K562 (cell line): ENCODE measurements at regions of chr11 and their contacts with region 1.

Region 1: DNA sequence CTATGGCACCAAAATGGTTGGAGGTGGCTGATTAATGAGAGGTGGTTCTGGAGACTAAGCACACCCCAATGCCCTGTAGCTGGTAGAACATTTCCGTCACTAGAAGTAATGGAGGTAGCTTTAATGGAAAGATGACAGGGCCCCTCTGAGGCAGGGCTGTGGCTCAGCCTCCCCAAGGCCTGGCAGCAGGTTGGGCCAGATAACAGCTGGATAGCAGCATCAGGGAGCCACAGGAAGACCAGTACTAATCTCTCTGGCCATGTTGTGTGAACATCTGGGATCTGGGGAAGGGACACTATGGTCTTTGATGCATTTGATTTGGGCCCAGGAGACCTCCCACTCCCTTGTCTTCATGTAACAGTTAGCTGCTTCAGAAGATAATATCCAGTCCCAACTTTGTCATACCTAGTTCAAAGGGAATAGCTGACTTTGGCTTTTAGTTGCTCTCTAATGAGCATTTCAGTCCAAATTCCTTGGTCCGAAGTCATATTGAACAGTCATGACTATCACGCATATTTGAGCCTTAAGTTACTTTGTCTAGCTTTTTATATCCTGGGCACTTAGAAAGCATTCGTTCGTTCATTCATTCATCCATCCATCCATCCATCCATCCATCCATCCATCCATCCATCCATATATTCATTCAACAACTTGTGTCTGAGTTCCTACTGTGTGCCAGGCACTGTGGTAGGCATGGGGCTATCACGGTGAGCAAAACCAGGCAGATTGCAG is 53.0 kb upstream of the LMO2 start:
- DNase-seq: peak; percentile 95 to 98 (median 96)
- ATAC-seq: peak; percentile 84
- H3K4me3 ChIP-seq: no peak overlapping the region
- H3K27ac ChIP-seq: peak overlapping the region; percentile 84
- H3K4me1 ChIP-seq: peaks cover 54 to 69% of the 10 kb centered on the region in 2 experiments
- H3K27me3 ChIP-seq: no peaks in the 10 kb centered on the region
- CTCF ChIP-seq: peak in 1 of 3 experiments; percentile 30; a peak in 2 of 6 replicates
- EP300 ChIP-seq: peak; percentile 100
- POLR2A ChIP-seq: no peak
- RAD21 ChIP-seq: peak in 1 of 2 experiments; percentile 46; a peak in 3 of 4 replicates

Region 2: DNA sequence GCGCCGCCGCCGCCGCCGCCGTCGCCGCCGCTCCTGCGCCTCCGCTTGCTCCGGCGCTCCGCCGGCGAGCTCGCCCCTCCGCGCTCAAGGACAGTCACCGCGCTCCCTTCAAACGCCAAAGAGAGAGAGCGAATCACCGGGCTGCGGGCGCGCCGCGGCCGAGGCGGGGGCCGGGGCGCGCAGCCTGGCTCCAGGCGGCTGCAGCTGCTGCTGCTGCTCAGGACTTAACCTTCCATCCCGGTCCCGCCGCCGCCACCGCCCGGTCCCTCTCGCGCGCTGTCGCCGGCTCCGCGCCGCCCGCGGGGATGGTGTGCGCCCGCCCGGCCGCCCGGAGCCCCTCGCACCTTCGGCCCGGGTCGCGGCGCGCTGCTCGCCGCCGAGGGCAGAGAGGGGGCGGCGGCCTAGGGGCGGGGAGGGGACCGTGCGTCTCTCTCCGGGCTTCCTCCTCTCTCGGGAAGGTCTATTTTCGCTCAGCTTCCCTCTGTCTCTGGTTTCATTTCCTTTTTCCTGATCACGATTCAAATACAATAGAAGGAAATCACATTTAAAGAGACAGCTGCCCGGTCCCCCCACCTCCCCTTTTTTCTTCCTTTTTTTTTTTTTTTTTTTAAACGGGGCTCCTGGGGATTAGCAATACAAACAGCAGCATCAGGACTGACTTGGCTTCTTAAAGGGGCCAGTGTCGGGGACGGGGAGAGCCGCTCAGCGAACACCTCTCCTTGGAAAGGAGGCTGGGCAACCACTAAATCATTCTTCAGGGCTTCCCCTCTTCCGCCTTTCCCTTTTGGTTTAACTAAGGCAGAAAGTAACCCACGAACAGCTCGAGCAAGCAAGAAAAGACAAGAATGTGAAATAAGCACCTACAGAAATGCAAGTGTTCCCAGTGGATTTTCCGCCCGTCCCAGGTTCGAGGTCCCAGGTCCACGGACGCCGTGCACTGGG is 75.1 kb before region 1 on chr11:
- CTCF ChIA-PET with region 1: no interaction called
- POLR2A ChIA-PET with region 1: interaction called, 12 read pairs
- in situ Hi-C with region 1: no loop called
- intact Hi-C with region 1: loop called (anchors 2 kb)
- DNase-seq: peak; percentile 61 to 75 (median 70)
- ATAC-seq: peak; percentile 57
- H3K4me3 ChIP-seq: peak overlapping the region; percentile 75
- H3K27ac ChIP-seq: peak overlapping the region; percentile 75
- H3K4me1 ChIP-seq: peaks cover 32 to 43% of the 10 kb centered on the region in 2 experiments
- H3K27me3 ChIP-seq: no peaks in the 10 kb centered on the region
- CTCF ChIP-seq: no peak
- EP300 ChIP-seq: no peak
- POLR2A ChIP-seq: no peak
- RAD21 ChIP-seq: no peak

Region 3: GRCh38 chr11:33893711-33894397 is 51.0 kb before region 1 on chr11:
- CTCF ChIA-PET with region 1: no interaction called
- POLR2A ChIA-PET with region 1: interaction called, 6 read pairs
- in situ Hi-C with region 1: no loop called
- intact Hi-C with region 1: loop called (anchors 2 kb)
- DNase-seq: peak in 1 of 4 experiments; percentile 60
- ATAC-seq: peak; percentile 3; the same call in 1 of the 3 replicates
- H3K4me3 ChIP-seq: no peak overlapping the region
- H3K27ac ChIP-seq: peak overlapping the region; percentile 76
- H3K4me1 ChIP-seq: peaks cover 39 to 58% of the 10 kb centered on the region in 2 experiments
- H3K27me3 ChIP-seq: no peaks in the 10 kb centered on the region
- CTCF ChIP-seq: no peak
- EP300 ChIP-seq: no peak
- POLR2A ChIP-seq: no peak
- RAD21 ChIP-seq: no peak

Region 4: GRCh38 chr11:33912405-33913361 is 32.2 kb before region 1 on chr11:
- CTCF ChIA-PET with region 1: no interaction called
- POLR2A ChIA-PET with region 1: no interaction called
- in situ Hi-C with region 1: no loop called
- intact Hi-C with region 1: loop called (anchors 1 kb)
- DNase-seq: peak; percentile 72 to 86 (median 76)
- ATAC-seq: peak; percentile 91
- H3K4me3 ChIP-seq: no peak overlapping the region
- H3K27ac ChIP-seq: peak overlapping the region; percentile 88
- H3K4me1 ChIP-seq: peaks cover 6 to 15% of the 10 kb centered on the region in 2 experiments; a peak in 3 of 5 replicates
- H3K27me3 ChIP-seq: no peaks in the 10 kb centered on the region
- CTCF ChIP-seq: 0 out of 6 replicates have a peak, but pooled peaks of 1 of the 3 experiments have one; percentile 3
- EP300 ChIP-seq: peak; percentile 68; the same call in 1 of the 2 replicates
- POLR2A ChIP-seq: peak; percentile 59; the same call in 1 of the 2 replicates
- RAD21 ChIP-seq: 0 out of 4 replicates have a peak, but pooled peaks of 1 of the 2 experiments have one; percentile 2

Region 5: GRCh38 chr11:33924341-33924740 is 20.5 kb before region 1 on chr11:
- CTCF ChIA-PET with region 1: no interaction called
- POLR2A ChIA-PET with region 1: interaction called, 10 read pairs
- in situ Hi-C with region 1: no loop called
- intact Hi-C with region 1: no loop called
- DNase-seq: no peak
- ATAC-seq: no peak
- H3K4me3 ChIP-seq: no peak overlapping the region
- H3K27ac ChIP-seq: no peak overlapping the region
- H3K4me1 ChIP-seq: peaks cover 4 to 22% of the 10 kb centered on the region in 2 experiments; a peak in 3 of 5 replicates
- H3K27me3 ChIP-seq: no peaks in the 10 kb centered on the region
- CTCF ChIP-seq: no peak
- EP300 ChIP-seq: no peak
- POLR2A ChIP-seq: no peak
- RAD21 ChIP-seq: no peak

Region 6: DNA sequence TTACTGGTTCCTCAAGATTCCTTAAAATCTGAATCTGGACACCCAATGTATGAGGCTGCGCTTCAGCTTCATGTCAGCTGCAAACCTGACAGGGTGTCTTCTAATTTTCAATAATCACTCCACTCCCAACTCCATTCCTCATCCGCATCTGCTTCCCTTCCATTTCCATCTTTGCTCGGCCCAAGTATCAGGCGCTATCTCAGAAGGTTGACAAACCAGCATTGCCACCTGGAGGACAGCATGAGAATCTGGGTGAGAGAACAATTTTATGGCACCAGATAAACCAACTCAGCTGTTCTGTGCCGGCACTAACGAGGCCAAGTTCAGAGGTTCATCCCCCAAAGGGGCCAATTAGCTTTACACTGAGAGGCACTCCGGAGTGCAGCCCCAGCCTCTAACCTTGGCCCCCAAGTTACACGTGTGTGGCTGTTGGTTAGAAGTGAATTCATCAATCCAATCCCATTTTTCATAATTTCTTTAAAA is 26.2 kb after region 1 on chr11:
- CTCF ChIA-PET with region 1: interaction called, 3 read pairs
- POLR2A ChIA-PET with region 1: no interaction called
- in situ Hi-C with region 1: no loop called
- intact Hi-C with region 1: loop called (anchors 2 kb)
- DNase-seq: peak; percentile 44 to 86 (median 63)
- ATAC-seq: peak; percentile 96
- H3K4me3 ChIP-seq: no peak overlapping the region
- H3K27ac ChIP-seq: no peak overlapping the region
- H3K4me1 ChIP-seq: peaks cover 0 to 4% of the 10 kb centered on the region in 2 experiments; a peak in 3 of 5 replicates
- H3K27me3 ChIP-seq: no peaks in the 10 kb centered on the region
- CTCF ChIP-seq: peak; percentile 88 to 96 (median 88)
- EP300 ChIP-seq: no peak
- POLR2A ChIP-seq: no peak
- RAD21 ChIP-seq: peak; percentile 99 to 100

Region 7: GRCh38 chr11:34013898-34014571 is 69.2 kb after region 1 on chr11:
- CTCF ChIA-PET with region 1: no interaction called
- POLR2A ChIA-PET with region 1: no interaction called
- in situ Hi-C with region 1: no loop called
- intact Hi-C with region 1: no loop called
- DNase-seq: no peak
- ATAC-seq: peak; percentile 35; the same call in 1 of the 3 replicates
- H3K4me3 ChIP-seq: no peak overlapping the region
- H3K27ac ChIP-seq: no peak overlapping the region
- H3K4me1 ChIP-seq: no peaks in the 10 kb centered on the region; a peak in 1 of 5 replicates
- H3K27me3 ChIP-seq: no peaks in the 10 kb centered on the region
- CTCF ChIP-seq: no peak
- EP300 ChIP-seq: no peak
- POLR2A ChIP-seq: no peak
- RAD21 ChIP-seq: no peak